ENCODE measurements at regions of chr15 and their contacts with region 1.

Region 1: DNA sequence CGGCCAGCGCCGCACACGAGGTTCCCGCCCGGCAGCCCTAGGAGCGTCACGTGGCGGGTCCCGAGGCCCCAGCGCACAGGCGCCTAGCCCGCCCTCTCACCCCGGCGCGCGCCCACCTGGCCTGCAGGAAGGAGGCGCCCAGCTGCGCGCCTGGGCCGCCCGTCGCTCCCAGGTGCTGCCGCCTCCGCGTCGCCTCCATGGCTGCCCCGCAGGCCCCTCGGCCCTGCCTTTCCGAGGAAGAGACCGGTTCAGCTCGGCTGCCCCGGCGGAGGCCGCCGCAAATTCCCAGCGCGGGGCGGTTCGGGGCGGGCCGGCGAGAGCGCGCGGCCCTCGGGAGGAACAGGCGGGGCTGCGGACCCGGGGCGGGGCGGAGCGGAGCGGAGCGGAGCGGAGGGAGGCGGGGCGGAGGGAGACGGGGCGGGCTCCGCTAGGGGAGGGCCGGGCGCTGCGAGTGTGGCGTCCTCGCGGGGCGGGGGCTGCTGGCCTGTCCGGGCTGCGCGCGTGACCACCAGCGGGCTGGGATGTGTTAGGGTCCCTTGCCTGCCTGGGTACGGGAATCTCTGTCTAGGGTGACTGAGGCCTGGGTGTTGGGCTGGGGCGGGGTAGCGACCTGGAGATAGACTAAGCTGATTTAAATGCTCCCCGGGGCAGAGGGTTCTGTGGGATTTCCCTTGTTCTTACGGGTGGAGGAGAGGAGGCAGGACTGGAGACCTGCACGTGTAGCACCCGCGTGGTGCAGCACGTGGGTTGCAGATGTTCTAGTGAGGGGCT is at the start of gene CLN6:
- DNase-seq: peak; percentile 46 to 85
- H3K4me3 ChIP-seq: peak within 1 kb of the TSS; percentile 96
- H3K27ac ChIP-seq: peak within 1 kb of the TSS; percentile 57 to 67
- H3K4me1 ChIP-seq: peaks cover 0 to 13% of the 10 kb centered on the region in 2 donors
- H3K27me3 ChIP-seq: no peaks in the 10 kb centered on the region
- CTCF ChIP-seq: no peak
- total RNA-seq, gene CLN6: 6.4 TPM

Region 2: DNA sequence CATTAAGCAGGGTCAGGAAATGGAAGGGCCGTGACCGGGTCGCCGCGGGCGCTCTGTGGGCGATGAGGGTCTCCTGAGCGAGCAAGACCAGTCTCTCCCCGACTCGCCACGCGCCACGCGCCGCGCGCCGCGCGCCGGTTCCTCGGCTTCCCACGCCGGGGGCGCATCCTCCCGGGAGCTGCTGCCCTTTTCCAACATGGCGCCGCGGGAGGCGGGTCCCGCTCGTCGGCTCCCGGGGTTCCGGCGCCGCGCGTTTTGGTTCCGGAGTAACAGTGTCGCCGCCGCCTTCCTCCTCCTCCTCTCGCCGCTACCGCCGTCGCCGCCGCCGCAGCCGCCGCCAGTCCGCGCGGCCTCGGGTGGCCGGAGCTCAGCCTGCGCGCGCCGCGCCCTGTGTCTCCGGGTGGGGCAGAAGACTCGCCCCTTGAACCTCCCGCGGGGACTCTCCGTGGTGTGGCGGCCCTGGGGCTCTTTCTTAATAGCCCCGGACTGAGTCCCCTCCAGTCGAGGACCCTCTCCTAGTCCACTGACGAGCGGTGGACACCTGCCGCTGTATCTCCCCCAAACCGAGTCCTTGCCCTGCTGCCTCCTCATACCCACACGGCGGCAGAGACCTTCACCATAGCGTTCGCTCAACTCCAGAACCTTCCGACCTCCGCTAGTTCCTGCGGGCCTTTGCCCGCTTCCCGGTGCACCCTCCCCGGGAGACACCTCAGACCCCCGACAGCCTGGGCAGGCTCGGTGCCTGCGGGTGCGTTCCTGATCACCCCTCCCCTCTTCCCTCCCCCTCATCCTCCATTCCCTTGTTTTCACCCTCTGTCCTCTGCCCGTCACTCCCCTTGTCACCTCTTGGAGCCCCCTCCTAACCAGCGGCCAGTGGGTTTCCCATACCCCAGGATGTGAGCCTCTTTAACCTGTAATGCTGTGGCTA is 686.9 kb before region 1 on chr15 and contains the start of gene MAP2K5:
- intact Hi-C with region 1: loop called (anchors 5 kb)
- DNase-seq: peak; percentile 46 to 93
- H3K4me3 ChIP-seq: peak within 1 kb of the TSS; percentile 96
- H3K27ac ChIP-seq: peak within 1 kb of the TSS; percentile 81 to 84
- H3K4me1 ChIP-seq: peaks cover 0 to 9% of the 10 kb centered on the region in 2 donors
- H3K27me3 ChIP-seq: no peaks in the 10 kb centered on the region
- CTCF ChIP-seq: no peak
- total RNA-seq, gene MAP2K5: 1.1 TPM

Region 3: DNA sequence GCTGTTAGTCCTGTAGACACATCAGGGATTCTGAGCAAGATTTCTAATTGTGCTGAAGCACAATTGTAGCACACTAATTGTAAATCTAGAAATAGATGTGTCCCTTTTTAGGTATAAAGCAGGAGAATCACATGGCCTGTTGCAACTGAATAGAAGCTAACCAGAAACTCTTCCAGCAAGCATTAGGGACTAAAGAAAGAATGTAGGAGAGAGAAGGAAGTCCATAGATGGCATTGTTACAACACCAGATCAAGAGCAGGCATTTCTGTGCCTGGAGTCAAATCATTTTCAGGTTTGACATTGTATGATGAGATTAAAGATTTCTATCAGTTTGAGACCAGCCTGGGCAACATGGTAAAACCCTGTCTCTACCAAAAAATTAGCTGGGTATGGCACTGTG is 51.8 kb before region 1 on chr15:
- intact Hi-C with region 1: loop called (anchors 2 kb)
- DNase-seq: no peak
- H3K4me3 ChIP-seq: no peak overlapping the region
- H3K27ac ChIP-seq: peak overlapping the region; percentile 43 to 54
- H3K4me1 ChIP-seq: peaks cover 6 to 18% of the 10 kb centered on the region in 2 donors
- H3K27me3 ChIP-seq: no peaks in the 10 kb centered on the region
- CTCF ChIP-seq: no peak

Region 4: GRCh38 chr15:68383161-68384074 is 153.8 kb after region 1 on chr15:
- intact Hi-C with region 1: no loop called
- DNase-seq: peak in 1 of 2 donors; percentile 62
- H3K4me3 ChIP-seq: no peak overlapping the region
- H3K27ac ChIP-seq: peak overlapping the region; percentile 73 to 80
- H3K4me1 ChIP-seq: peaks cover 8 to 27% of the 10 kb centered on the region in 2 donors
- H3K27me3 ChIP-seq: no peaks in the 10 kb centered on the region
- CTCF ChIP-seq: peak; percentile 55 to 64 (median 61)